OCI-LY7 (cell line): ENCODE measurements at regions of chr3 and their contacts with region 1.

Region 1: GRCh38 chr3:27484015-27484844 is at the start of gene SLC4A7:
- DNase-seq: peak; percentile 96
- H3K4me3 ChIP-seq: peak within 1 kb of the TSS; percentile 99
- H3K27ac ChIP-seq: peak within 1 kb of the TSS; percentile 54
- H3K4me1 ChIP-seq: peaks cover 27% of the 10 kb centered on the region
- CTCF ChIP-seq: no peak
- total RNA-seq, gene SLC4A7: 25.9 and 27.2 TPM in 2 replicates

Region 2: DNA sequence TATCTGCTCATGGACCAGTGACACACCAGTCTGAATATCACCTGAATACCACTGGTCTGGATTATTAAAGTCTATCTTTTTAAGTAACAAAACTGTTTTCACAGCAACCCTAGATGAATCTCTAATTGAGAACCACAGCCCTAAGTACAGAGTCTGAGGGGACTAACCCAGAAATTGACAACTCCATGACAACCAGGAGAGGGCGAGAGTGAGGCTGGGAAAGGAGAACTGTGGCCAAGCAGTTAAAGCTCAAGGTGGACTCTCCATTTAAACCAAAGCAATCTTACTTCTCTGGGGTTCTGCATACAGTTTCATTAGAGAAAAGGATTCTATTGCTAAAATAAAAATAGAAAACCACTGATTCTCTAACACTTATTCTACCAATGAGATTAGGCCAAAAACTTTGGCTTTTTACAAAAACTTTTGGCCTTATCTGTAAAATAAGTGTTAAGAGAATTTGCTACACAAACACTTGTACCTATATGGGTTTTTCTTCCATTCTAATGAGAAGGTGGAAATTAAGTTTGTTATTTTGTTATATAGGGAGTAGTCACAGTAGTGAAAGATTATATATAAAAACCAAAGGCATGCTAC is 126.5 kb before region 1 on chr3:
- CTCF ChIA-PET with region 1: no interaction called
- POLR2A ChIA-PET with region 1: no interaction called
- intact Hi-C with region 1: loop called (anchors 5 kb)
- DNase-seq: peak; percentile 64
- H3K4me3 ChIP-seq: no peak overlapping the region
- H3K27ac ChIP-seq: no peak overlapping the region
- H3K4me1 ChIP-seq: peaks cover 21% of the 10 kb centered on the region
- CTCF ChIP-seq: peak; percentile 86

Region 3: DNA sequence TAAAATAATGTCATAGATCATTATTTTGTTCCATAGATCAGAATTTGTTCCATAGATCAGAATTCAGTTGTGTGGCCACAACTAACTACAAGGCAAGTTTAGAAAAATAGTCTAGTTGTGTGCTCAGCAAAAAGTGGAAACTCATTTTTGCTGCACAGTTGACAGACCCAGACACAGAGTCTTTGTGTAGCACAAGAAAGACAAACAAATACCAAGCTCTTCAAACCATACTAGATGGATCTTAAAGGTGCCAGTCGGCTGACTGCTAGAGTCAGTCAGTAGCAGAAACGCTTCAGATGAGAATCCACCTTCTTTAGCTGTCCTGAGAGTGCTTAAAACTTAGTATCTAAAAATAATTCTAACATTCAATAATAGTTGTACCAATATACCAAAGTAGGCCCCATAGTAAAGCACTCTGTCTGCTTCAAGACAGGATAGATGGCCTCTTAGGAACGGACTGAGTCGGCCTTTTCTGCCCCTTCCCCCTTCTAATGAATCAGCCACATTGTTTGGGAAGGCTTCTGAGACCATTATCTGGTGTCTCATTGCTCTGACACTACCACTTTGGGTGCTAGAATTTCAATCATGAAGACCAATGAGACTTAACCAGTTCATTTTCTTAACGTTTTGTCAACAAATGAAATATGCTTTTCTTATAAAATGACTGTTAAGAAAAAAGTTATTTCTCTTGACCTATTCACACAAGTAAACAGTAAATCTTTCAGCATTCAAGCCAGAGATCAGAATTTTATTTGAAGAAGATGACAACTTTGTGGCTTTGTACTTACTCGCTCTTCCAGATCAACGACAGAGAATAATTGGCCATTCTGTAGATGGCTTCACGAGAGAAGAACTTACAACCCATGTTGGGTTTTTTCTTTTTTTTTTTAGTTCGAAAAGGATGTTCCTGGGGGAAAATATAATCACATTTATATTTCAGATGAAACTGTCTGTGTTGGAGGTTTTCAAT is 27.8 kb after region 1 on chr3:
- CTCF ChIA-PET with region 1: no interaction called
- POLR2A ChIA-PET with region 1: interaction called, 10 read pairs
- intact Hi-C with region 1: no loop called
- DNase-seq: no peak
- H3K4me3 ChIP-seq: no peak overlapping the region
- H3K27ac ChIP-seq: no peak overlapping the region
- H3K4me1 ChIP-seq: no peaks in the 10 kb centered on the region
- CTCF ChIP-seq: no peak

Region 4: DNA sequence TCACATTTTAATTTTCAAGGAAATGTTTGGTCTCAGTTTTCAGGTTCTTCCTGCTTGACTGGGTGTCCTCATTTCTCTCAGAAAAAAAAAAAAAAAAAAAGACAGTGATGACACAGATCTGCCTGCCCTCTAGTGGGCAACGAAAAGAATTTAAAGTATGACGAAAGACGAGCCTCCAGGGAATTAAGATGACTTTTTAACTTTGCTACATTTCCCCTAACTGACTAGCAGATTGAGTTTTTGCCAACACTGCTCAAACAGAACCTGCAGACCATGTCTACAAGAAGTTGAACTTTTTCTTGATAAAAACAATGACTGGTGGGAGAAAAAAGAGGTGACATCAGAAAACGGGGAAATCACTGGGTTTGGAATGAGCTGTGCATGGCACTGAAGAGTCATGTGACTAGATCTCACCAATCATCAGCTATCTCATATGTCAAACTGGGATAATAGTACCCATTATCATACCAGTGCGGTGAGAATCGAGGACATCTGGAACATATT is 197.1 kb after region 1 on chr3:
- CTCF ChIA-PET with region 1: no interaction called
- POLR2A ChIA-PET with region 1: no interaction called
- intact Hi-C with region 1: loop called (anchors 10 kb)
- DNase-seq: peak; percentile 79
- H3K4me3 ChIP-seq: peak overlapping the region; percentile 34
- H3K27ac ChIP-seq: no peak overlapping the region
- H3K4me1 ChIP-seq: no peaks in the 10 kb centered on the region
- CTCF ChIP-seq: peak; percentile 88

Region 5: GRCh38 chr3:28134792-28135375 is 650.7 kb after region 1 on chr3:
- CTCF ChIA-PET with region 1: no interaction called
- POLR2A ChIA-PET with region 1: no interaction called
- intact Hi-C with region 1: no loop called
- DNase-seq: no peak
- H3K4me3 ChIP-seq: no peak overlapping the region
- H3K27ac ChIP-seq: no peak overlapping the region
- H3K4me1 ChIP-seq: no peaks in the 10 kb centered on the region
- CTCF ChIP-seq: no peak

Region 6: DNA sequence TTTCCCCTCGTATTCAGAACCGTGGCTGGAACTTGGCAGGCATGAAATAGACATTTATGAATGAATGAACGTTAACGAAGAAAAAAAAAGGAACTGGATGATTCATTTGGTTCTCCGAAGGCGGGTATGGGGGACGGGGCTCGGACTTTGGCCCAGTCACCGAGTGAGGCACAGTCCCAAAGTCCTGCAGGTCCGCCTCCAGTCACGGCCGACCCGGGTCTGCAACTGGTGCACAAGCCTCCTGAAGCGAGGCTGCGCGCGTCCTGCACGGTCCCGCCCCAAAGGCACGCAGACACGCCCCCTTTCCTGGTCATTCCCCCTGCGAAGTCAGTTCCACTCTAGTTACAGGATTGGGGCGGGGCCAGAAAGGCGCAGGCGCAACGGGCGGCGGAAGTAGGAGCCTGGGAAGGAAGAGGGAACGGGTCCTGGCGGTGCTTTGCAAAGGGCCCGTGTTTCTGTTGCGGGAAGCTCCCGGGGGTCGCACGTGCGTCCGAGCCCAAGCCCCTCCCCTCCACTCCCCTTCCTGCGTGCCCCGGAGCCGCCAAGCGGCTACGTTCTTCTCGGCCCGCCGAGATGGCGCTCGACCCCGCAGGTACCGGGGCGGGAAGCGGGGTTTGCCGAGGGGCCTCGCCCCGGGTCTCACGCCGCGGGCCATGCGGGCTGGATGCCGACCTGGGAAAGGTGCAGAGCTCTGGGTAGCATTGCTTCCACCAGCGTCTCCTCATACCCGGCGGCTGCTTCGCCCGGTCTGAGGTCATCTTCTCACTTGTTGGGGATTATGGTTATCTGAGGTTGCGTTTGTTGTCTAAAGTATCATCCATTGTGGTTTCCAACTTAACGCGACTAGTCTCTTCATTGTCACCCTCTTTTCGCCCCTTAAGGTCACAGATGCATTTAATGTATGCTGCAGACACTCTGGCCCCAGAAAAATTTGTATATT is 757.3 kb after region 1 on chr3 and contains the start of gene CMC1:
- CTCF ChIA-PET with region 1: no interaction called
- POLR2A ChIA-PET with region 1: no interaction called
- intact Hi-C with region 1: loop called (anchors 5 kb)
- DNase-seq: peak; percentile 92
- H3K4me3 ChIP-seq: peak within 1 kb of the TSS; percentile 79
- H3K27ac ChIP-seq: peak within 1 kb of the TSS; percentile 43
- H3K4me1 ChIP-seq: peaks cover 15% of the 10 kb centered on the region
- CTCF ChIP-seq: no peak
- total RNA-seq, gene CMC1: 3.4 and 12.1 TPM in 2 replicates

Region 7: GRCh38 chr3:28348629-28349483 is 864.6 kb after region 1 on chr3 and contains the starts of genes AZI2 and ZCWPW2:
- CTCF ChIA-PET with region 1: no interaction called
- POLR2A ChIA-PET with region 1: no interaction called
- intact Hi-C with region 1: loop called (anchors 10 kb)
- DNase-seq: peak; percentile 94
- H3K4me3 ChIP-seq: peak within 1 kb of the TSS; percentile 90
- H3K27ac ChIP-seq: peak within 1 kb of the TSS; percentile 56
- H3K4me1 ChIP-seq: peaks cover 31% of the 10 kb centered on the region
- CTCF ChIP-seq: peak; percentile 49
- total RNA-seq, gene AZI2: 16.1 and 16.4 TPM in 2 replicates
- total RNA-seq, gene ZCWPW2: not detected in 2 replicates